Prostate gland (tissue), 2 donors: ENCODE measurements at regions of chr7 and their contacts with region 1.

Region 1: GRCh38 chr7:140003913-140004382 is 58.8 kb downstream of the PARP12 start:
- DNase-seq: no peak
- H3K4me3 ChIP-seq: no peak overlapping the region
- H3K27ac ChIP-seq: no peak overlapping the region
- H3K4me1 ChIP-seq: no peaks in the 10 kb centered on the region
- H3K27me3 ChIP-seq: no peaks in the 10 kb centered on the region
- CTCF ChIP-seq: peak in 3 of 4 experiments; percentile 32 to 60 (median 50)
- POLR2A ChIP-seq: no peak

Region 2: DNA sequence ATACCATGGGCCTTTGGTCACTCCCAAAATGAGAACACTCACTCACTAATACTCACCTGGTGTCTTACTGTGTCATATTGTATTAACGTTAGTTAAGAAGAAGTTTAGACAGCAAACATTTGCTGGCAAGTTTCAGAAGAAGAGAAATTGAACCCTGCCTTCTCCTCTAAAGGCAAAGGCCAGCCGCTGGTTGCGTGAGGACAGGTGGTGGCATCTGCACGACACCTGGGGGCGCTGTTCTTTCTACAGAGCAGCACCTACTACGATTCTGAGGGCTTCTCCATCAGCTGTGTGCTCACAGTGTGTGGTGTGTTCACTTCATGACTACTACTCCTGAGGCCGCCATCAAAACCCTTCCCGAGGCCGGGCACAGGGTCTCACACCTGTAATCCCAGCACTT is 498.4 kb before region 1 on chr7:
- intact Hi-C with region 1: loop called (anchors 5 kb)
- DNase-seq: no peak
- H3K4me3 ChIP-seq: no peak overlapping the region
- H3K27ac ChIP-seq: no peak overlapping the region
- H3K4me1 ChIP-seq: no peaks in the 10 kb centered on the region
- H3K27me3 ChIP-seq: no peaks in the 10 kb centered on the region
- CTCF ChIP-seq: no peak
- POLR2A ChIP-seq: no peak

Region 3: DNA sequence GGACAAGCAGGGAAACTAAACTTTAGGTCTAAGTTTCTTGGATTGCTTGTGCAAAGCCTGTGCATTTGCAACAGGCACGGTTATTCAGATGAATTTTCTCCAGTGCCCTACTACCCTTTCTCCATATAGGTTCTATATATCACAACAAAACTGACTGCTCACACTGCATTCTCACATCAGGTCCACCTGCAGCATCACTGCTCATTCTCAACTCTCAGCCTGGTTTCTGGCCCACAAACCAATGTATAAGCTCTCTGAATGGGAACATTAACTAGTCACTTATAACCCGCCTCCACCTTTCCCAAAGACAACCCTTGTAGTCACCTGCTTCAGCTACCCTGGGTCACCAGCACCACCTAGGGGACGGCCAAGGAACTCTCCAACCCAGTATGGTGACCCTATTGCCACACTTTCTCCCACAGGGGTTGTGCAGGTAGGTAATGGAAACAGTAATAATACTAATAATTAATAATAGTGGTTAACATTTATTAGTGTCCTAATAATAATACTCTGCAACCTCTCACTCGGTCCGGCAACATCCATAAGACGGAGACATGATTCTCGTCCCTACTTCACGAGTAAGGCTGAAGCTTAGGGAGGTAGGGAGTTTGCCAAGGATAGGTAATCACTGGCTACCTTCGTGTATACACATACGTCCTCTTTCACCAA is 383.1 kb before region 1 on chr7:
- intact Hi-C with region 1: loop called (anchors 5 kb)
- DNase-seq: no peak
- H3K4me3 ChIP-seq: no peak overlapping the region
- H3K27ac ChIP-seq: no peak overlapping the region
- H3K4me1 ChIP-seq: no peaks in the 10 kb centered on the region
- H3K27me3 ChIP-seq: no peaks in the 10 kb centered on the region
- CTCF ChIP-seq: peak in 3 of 4 experiments; percentile 32 to 56 (median 47)
- POLR2A ChIP-seq: no peak

Region 4: GRCh38 chr7:139645572-139646523 is 358.1 kb before region 1 on chr7:
- intact Hi-C with region 1: loop called (anchors 1 kb)
- DNase-seq: peak; percentile 85
- H3K4me3 ChIP-seq: no peak overlapping the region
- H3K27ac ChIP-seq: peak overlapping the region in 1 of 2 donors; percentile 27
- H3K4me1 ChIP-seq: peaks cover 4% of the 10 kb centered on the region
- H3K27me3 ChIP-seq: no peaks in the 10 kb centered on the region
- CTCF ChIP-seq: peak; percentile 91 to 94 (median 93)
- POLR2A ChIP-seq: no peak

Region 5: GRCh38 chr7:139660317-139661042 is 343.5 kb before region 1 on chr7:
- intact Hi-C with region 1: no loop called
- DNase-seq: peak; percentile 47
- H3K4me3 ChIP-seq: no peak overlapping the region
- H3K27ac ChIP-seq: peak overlapping the region; percentile 54 to 75
- H3K4me1 ChIP-seq: peaks cover 20% of the 10 kb centered on the region
- H3K27me3 ChIP-seq: no peaks in the 10 kb centered on the region
- CTCF ChIP-seq: no peak
- POLR2A ChIP-seq: no peak

Region 6: DNA sequence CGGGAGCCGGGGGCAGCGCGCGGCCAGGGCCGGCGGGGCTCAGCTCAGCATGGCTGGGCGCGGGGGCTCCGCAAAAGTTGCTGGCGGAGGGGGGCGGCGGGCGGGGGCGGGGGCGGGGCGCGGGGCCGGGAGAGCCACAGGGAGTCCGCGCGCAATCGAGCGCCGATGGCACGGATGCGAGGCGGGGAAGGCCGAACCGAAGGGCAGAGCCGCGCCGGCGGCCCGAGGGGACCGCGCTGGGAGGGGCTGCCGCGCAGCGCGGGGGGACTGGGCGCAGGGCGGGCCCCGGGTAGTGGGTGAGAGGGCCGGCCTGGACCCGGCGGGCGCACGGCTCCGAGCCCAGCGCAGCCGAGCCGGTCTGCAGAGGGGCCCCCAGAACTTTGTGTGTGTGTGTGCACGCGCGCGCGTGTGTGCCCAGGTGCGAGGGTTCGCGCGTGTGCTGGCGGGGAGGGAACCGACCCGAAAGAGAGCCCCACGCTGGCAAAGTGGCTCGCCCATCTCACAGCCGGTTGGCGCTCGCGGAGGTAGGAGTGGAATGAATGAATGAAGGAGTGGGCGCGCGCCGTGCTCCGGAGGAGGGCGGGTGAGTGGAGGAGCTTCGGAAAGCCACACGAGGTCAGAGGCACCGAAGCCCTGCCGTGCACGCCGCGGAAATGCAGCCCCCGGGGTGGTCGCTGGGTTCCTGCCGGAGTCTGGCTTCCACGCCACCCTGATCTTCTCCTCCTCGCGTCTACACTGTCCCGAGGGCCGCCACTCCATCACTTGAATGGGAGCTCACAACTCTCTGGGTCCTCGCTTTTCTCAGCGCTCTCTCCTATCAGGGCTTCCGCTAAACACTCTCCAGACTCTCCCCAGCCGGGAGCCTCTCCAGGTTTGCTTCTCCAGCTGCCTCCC is 225.8 kb before region 1 on chr7 and contains the start of gene HIPK2:
- intact Hi-C with region 1: loop called (anchors 2 kb)
- DNase-seq: peak; percentile 74
- H3K4me3 ChIP-seq: peak within 1 kb of the TSS; percentile 74 to 90
- H3K27ac ChIP-seq: peak within 1 kb of the TSS; percentile 95 to 97
- H3K4me1 ChIP-seq: no peaks in the 10 kb centered on the region
- H3K27me3 ChIP-seq: no peaks in the 10 kb centered on the region
- CTCF ChIP-seq: no peak
- POLR2A ChIP-seq: peak; percentile 18
- total RNA-seq, gene HIPK2: 54.4 to 72.7 TPM

Region 7: GRCh38 chr7:140326116-140326928 is 322.4 kb after region 1 on chr7:
- intact Hi-C with region 1: loop called (anchors 10 kb)
- DNase-seq: peak; percentile 71
- H3K4me3 ChIP-seq: no peak overlapping the region
- H3K27ac ChIP-seq: peak overlapping the region; percentile 58 to 71
- H3K4me1 ChIP-seq: no peaks in the 10 kb centered on the region
- H3K27me3 ChIP-seq: no peaks in the 10 kb centered on the region
- CTCF ChIP-seq: peak in 3 of 4 experiments; percentile 51 to 76 (median 76)
- POLR2A ChIP-seq: no peak